ENCODE measurements at regions of chr16 and their contacts with region 1.

Region 1: GRCh38 chr16:12095275-12096156 is 119.0 kb downstream of the SNX29 start:
- DNase-seq: peak; percentile 74
- H3K4me3 Mint-ChIP-seq: peak overlapping the region; percentile 50
- H3K27ac Mint-ChIP-seq: no peak overlapping the region
- H3K4me1 Mint-ChIP-seq: peaks cover 11% of the 10 kb centered on the region
- H3K27me3 Mint-ChIP-seq: no peaks in the 10 kb centered on the region

Region 2: GRCh38 chr16:12111223-12111622 is 15.7 kb after region 1 on chr16:
- CTCF ChIA-PET with region 1: interaction called, 24 read pairs
- intact Hi-C with region 1: no loop called
- DNase-seq: no peak
- H3K4me3 Mint-ChIP-seq: no peak overlapping the region
- H3K27ac Mint-ChIP-seq: no peak overlapping the region
- H3K4me1 Mint-ChIP-seq: no peaks in the 10 kb centered on the region
- H3K27me3 Mint-ChIP-seq: no peaks in the 10 kb centered on the region

Region 3: DNA sequence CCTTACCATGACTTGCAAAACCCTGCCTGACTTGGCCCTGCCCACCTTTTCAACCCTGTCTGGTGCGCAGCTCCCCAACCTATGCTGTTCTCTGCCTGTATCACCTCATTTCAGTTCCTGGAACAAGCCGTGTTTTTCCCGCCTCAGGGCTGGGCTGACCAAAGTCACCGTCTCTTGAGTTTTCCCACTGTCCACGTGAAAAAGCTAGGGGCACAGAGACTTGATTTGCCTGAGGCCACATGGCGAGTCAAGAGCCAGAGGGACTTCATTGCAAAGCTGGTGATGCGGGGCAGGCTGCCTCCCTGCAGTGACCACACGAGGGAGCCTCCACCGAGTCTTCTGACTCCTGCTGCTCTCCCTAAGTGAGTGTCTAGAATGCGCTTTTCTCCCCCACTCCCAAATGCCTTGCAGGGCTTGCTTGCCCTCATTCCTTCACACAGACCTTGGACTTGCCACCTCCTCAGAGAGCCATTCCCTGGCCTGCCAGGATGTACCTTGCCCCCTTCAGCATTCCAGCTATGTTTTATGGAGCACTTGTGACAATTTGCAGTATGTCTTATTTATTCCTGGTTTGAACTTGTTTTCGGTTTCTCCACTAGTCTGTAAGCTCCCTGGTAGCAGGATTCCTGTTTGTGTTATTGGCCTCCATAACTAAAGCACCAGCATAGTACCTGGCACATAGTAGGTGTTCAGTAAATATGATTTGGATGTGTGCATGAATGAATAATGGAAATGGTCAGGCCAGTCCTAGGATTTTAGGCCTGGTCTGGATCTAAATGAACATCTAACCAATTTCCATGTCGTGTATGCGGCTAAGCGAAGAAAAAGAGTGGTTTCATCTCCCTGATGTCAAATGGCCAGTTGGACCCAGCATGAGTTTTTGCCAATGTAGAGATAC is 133.3 kb after region 1 on chr16:
- CTCF ChIA-PET with region 1: interaction called, 12 read pairs
- intact Hi-C with region 1: no loop called
- DNase-seq: peak; percentile 56
- H3K4me3 Mint-ChIP-seq: no peak overlapping the region
- H3K27ac Mint-ChIP-seq: no peak overlapping the region
- H3K4me1 Mint-ChIP-seq: peaks cover 19% of the 10 kb centered on the region
- H3K27me3 Mint-ChIP-seq: no peaks in the 10 kb centered on the region

Region 4: DNA sequence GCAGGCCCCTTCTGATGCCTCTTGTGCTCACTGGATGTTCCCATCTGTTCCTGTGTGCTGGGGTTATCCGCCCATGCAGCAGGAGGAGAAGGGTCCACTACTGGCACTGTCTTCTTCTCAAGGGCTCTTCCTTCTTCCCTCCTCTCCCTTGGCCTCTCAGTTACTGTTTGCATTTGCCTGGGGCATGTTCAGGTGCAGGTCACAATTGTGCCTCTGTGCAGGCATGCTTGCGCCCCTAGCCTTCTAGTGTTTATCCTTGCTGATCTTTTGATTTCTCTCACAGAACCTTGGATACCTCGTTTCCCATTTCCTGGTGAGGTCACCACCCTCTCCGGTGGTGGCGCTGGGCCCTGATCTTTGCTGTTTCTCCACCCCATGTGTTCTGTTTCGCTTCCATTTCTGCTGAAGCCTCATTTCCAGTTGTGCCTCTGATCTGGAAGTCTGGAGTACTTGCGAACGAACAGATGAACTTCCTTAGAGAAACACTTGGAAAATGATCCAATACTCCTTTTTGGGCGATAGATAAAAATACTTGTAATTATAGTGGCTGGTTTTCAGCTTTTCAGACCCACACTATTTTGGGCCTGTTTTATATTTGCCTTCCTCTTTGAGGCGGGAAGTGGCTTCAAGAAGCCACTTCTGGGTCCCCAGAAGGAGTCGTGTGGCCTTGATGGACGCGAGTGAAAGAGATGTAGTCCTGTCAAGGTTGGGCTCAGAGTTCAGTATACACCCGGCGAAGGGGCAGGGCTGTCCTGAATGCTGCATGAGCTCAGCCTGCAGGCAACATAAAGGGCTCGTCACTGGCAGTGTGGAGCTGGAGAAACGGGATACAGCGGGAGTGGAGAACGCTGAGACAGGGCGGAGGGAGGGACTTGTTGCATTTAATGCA is 193.9 kb after region 1 on chr16:
- CTCF ChIA-PET with region 1: no interaction called
- intact Hi-C with region 1: loop called (anchors 10 kb)
- DNase-seq: no peak
- H3K4me3 Mint-ChIP-seq: no peak overlapping the region
- H3K27ac Mint-ChIP-seq: no peak overlapping the region
- H3K4me1 Mint-ChIP-seq: no peaks in the 10 kb centered on the region
- H3K27me3 Mint-ChIP-seq: no peaks in the 10 kb centered on the region

Region 5: DNA sequence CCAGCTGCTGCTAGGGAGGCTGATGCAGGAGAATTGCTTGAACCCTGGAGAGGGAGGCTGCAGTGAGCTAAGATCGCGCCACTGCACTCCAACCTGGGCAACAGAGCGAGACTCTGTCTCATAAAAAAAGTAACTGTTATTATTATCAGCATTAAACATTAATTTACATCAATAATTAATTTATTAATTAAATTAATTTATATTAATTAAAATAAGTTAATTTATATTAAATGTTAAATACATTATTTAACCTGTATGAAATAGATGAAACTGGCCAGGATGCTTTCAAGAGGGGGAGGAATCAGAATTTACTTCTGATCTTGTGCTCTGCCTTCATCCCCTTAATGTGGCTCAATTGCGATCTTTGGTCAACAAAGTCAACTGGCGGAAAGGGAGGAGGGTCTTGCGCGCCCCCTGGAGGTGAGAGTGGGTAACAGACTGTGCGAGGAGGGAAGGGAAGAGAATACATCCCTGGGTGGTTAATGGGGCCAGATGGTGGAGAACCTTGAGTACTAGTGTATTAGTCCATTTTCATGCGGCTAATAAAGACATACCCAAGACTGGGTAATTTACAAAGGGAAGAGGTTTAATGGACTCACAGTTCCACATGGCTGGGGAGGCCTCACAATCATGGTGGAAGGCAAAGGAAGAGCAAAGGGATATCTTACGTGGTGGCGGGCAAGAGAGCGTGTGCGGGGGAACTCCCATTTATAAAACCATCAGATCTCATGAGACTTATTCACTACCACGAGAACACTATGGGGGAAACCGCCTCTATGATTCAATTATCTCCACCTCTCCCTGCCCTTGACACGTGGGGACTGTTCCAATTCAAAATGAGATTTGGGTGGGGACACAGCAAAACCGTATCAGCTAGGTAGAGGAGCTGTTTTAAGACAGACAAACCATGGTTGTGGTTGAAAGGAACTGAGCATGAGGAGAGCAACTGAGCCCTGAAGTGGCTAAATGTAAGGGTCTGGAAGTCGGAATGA is 723.9 kb after region 1 on chr16:
- CTCF ChIA-PET with region 1: interaction called, 6 read pairs
- intact Hi-C with region 1: loop called (anchors 2 kb)
- DNase-seq: peak; percentile 88
- H3K4me3 Mint-ChIP-seq: no peak overlapping the region
- H3K27ac Mint-ChIP-seq: no peak overlapping the region
- H3K4me1 Mint-ChIP-seq: no peaks in the 10 kb centered on the region
- H3K27me3 Mint-ChIP-seq: no peaks in the 10 kb centered on the region